SK-N-SH (cell line): ENCODE measurements at regions of chr4 and their contacts with region 1.

Region 1: DNA sequence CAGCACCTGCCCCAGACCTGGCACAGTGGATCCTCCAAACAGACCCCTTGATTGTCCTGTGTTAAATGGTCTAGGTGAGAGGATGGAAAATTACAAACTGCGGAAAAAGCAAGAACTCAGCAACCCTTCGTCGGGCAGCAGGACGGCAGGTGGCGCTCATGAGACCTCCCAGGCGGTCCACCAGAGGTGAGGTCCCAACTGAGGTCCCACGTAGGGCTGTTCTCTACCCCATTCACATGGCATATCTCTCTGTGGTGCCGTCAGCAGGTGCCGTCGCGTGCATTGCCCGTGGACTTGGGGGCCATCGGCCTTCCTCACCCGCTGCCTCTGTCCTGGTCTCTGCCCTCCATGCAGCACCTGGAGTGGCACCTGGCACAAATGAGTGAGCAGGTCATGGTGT is 88.2 kb downstream of the CRMP1 start:
- DNase-seq: no peak
- H3K4me3 ChIP-seq: no peak overlapping the region
- H3K27ac ChIP-seq: no peak overlapping the region
- H3K4me1 ChIP-seq: peaks cover 0 to 11% of the 10 kb centered on the region in 2 experiments; a peak in 1 of 4 replicates
- H3K27me3 ChIP-seq: no peaks in the 10 kb centered on the region
- CTCF ChIP-seq: peak; percentile 21
- EP300 ChIP-seq: no peak
- RAD21 ChIP-seq: no peak

Region 2: DNA sequence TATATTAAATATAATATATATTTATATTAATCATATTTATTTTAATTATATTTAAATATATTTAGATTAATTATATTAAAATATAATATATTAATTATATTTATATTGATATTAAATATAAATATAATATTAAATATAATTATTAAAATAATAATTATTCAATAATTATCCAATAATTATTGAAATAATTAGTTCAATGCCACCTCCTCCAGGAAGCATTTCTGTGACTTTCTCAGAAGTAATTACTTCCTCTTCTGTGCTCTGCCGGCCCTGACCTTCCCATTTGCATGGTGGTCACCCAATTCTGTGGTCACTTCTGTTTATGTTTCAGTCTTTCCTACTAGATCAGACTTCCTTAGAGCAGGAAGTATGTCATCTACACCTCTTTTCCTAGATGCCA is 142.1 kb before region 1 on chr4:
- CTCF ChIA-PET with region 1: no interaction called
- POLR2A ChIA-PET with region 1: no interaction called
- DNase-seq: no peak
- H3K4me3 ChIP-seq: no peak overlapping the region
- H3K27ac ChIP-seq: no peak overlapping the region
- H3K4me1 ChIP-seq: no peaks in the 10 kb centered on the region; a peak in 1 of 4 replicates
- H3K27me3 ChIP-seq: no peaks in the 10 kb centered on the region
- CTCF ChIP-seq: no peak
- EP300 ChIP-seq: no peak
- RAD21 ChIP-seq: no peak

Region 3: GRCh38 chr4:5767802-5768201 is 36.9 kb before region 1 on chr4:
- CTCF ChIA-PET with region 1: no interaction called
- POLR2A ChIA-PET with region 1: no interaction called
- DNase-seq: no peak
- H3K4me3 ChIP-seq: no peak overlapping the region
- H3K27ac ChIP-seq: no peak overlapping the region
- H3K4me1 ChIP-seq: no peaks in the 10 kb centered on the region; a peak in 1 of 4 replicates
- H3K27me3 ChIP-seq: no peaks in the 10 kb centered on the region
- CTCF ChIP-seq: no peak
- EP300 ChIP-seq: no peak
- RAD21 ChIP-seq: no peak

Region 4: GRCh38 chr4:5791654-5792053 is 13.0 kb before region 1 on chr4:
- CTCF ChIA-PET with region 1: interaction called, 13 read pairs
- POLR2A ChIA-PET with region 1: no interaction called
- DNase-seq: no peak
- H3K4me3 ChIP-seq: no peak overlapping the region
- H3K27ac ChIP-seq: no peak overlapping the region
- H3K4me1 ChIP-seq: no peaks in the 10 kb centered on the region
- H3K27me3 ChIP-seq: no peaks in the 10 kb centered on the region
- CTCF ChIP-seq: no peak
- EP300 ChIP-seq: no peak
- RAD21 ChIP-seq: no peak